ENCODE measurements at regions of chr1 and their contacts with region 1.

Region 1: GRCh38 chr1:173420330-173420806 is 56.8 kb upstream of the PRDX6 start:
- DNase-seq: no peak
- ATAC-seq: peak; percentile 26
- H3K4me3 ChIP-seq: no peak overlapping the region
- H3K27ac ChIP-seq: no peak overlapping the region
- H3K4me1 ChIP-seq: peaks cover 39% of the 10 kb centered on the region
- H3K27me3 ChIP-seq: no peaks in the 10 kb centered on the region
- CTCF ChIP-seq: peak; percentile 68 to 80 (median 73)
- EP300 ChIP-seq: no peak
- POLR2A ChIP-seq: no peak
- RAD21 ChIP-seq: peak; percentile 90

Region 2: DNA sequence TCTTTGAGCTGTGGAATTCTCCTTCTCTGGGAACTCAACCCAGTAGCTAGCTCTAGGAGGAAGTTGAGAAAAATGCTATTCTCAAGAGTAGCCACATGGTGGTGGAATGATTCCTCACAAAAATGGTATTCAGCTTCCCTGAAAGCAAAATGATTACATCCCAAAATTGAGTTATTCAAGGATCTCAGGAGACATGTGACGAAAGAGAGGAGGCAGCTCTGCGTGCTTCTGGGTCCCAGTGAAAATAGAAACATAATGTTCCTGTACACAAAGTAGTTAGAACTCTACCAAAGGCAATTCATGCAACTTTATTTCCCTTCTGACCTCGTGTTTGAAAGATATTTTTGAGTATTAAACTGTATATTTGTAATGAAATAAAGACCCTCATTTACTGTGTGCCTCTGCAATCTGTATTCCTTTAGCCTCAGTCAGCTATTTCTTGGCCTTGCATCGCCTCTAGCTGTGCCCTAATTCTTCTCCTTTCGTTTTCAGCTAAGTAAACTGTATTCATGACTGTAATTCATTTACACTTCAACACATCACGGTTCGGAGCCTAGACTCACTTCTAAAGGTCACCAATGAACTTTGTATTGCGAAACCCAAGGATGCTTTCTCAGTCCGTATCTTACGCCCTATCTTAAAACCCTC is 594.1 kb before region 1 on chr1:
- CTCF ChIA-PET with region 1: interaction called, 14 read pairs
- POLR2A ChIA-PET with region 1: no interaction called
- RAD21 ChIA-PET with region 1: interaction called, 15 read pairs
- SMC1A ChIA-PET with region 1: interaction called, 10 read pairs
- in situ Hi-C with region 1: loop called (anchors 5 kb)
- intact Hi-C with region 1: no loop called
- DNase-seq: no peak
- ATAC-seq: peak; percentile 65
- H3K4me3 ChIP-seq: no peak overlapping the region
- H3K27ac ChIP-seq: no peak overlapping the region
- H3K4me1 ChIP-seq: peaks cover 4% of the 10 kb centered on the region; the same call in 1 of the 2 replicates
- H3K27me3 ChIP-seq: no peaks in the 10 kb centered on the region
- CTCF ChIP-seq: peak; percentile 47 to 61 (median 51); a peak in 5 of 6 replicates
- EP300 ChIP-seq: no peak
- POLR2A ChIP-seq: no peak
- RAD21 ChIP-seq: peak; percentile 81

Region 3: DNA sequence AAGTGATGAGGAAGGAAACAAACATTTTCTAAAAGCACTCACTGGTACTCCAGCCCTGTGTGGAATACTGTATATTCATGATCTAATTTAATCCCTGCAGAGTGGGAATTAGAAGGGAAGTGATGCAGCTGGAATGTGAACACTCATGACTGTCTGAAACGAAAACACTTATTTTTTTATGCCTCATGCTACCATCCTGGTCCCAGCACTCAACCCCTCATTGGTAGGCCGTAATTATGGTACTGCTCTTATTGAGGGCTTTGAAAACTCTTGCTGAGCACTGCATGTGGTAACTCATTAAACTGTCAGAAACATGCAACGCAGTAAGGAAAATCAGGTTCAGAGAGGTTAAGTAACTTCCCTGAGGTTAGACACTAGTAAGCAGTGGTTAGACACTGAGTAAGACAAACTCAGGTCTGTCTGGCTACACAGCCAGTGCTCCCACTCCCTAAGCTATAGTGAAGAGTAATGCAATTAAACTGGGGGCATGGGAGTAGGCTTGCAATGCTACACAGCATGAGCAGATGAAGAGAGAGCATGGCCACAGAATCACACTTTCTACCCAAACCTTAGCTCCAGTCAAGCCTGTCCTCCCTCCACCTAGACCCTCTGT is 196.0 kb before region 1 on chr1:
- CTCF ChIA-PET with region 1: interaction called, 7 read pairs
- POLR2A ChIA-PET with region 1: interaction called, 3 read pairs
- RAD21 ChIA-PET with region 1: interaction called, 4 read pairs
- SMC1A ChIA-PET with region 1: interaction called, 14 read pairs
- in situ Hi-C with region 1: no loop called
- intact Hi-C with region 1: no loop called
- DNase-seq: no peak
- ATAC-seq: peak; percentile 13
- H3K4me3 ChIP-seq: no peak overlapping the region
- H3K27ac ChIP-seq: no peak overlapping the region
- H3K4me1 ChIP-seq: peaks cover 38% of the 10 kb centered on the region
- H3K27me3 ChIP-seq: no peaks in the 10 kb centered on the region
- CTCF ChIP-seq: no peak
- EP300 ChIP-seq: no peak
- POLR2A ChIP-seq: no peak
- RAD21 ChIP-seq: no peak

Region 4: DNA sequence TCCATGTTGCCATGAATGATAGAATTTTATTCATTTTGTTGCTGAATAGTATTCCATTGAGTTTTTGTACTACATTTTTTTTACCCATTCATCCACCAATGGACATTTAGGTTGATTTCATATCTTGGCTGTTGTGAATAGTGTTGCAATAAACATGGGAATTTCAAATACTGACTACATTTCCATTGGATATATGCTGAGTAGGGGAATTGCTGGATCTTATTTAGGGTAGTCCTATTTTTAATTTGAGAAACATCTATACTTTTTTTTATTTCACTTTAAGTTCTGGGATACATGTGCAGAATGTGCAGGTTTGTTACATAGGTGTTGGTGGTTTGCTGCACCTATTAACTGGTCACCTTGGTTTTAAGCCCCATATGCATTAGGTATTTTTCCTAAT is 174.5 kb before region 1 on chr1:
- CTCF ChIA-PET with region 1: no interaction called
- POLR2A ChIA-PET with region 1: no interaction called
- RAD21 ChIA-PET with region 1: no interaction called
- SMC1A ChIA-PET with region 1: no interaction called
- in situ Hi-C with region 1: no loop called
- intact Hi-C with region 1: no loop called
- DNase-seq: no peak
- ATAC-seq: no peak
- H3K4me3 ChIP-seq: no peak overlapping the region
- H3K27ac ChIP-seq: no peak overlapping the region
- H3K4me1 ChIP-seq: no peaks in the 10 kb centered on the region; the same call in 1 of the 2 replicates
- H3K27me3 ChIP-seq: no peaks in the 10 kb centered on the region
- CTCF ChIP-seq: no peak
- EP300 ChIP-seq: no peak
- POLR2A ChIP-seq: no peak
- RAD21 ChIP-seq: no peak

Region 5: GRCh38 chr1:173297798-173298391 is 122.5 kb before region 1 on chr1:
- CTCF ChIA-PET with region 1: no interaction called
- POLR2A ChIA-PET with region 1: interaction called, 5 read pairs
- RAD21 ChIA-PET with region 1: interaction called, 5 read pairs
- SMC1A ChIA-PET with region 1: interaction called, 16 read pairs
- in situ Hi-C with region 1: no loop called
- intact Hi-C with region 1: no loop called
- DNase-seq: peak; percentile 92
- ATAC-seq: peak; percentile 95
- H3K4me3 ChIP-seq: peak overlapping the region; percentile 1; the same call in 1 of the 2 replicates
- H3K27ac ChIP-seq: peak overlapping the region; percentile 46; the same call in 1 of the 2 replicates
- H3K4me1 ChIP-seq: peaks cover 29% of the 10 kb centered on the region
- H3K27me3 ChIP-seq: no peaks in the 10 kb centered on the region
- CTCF ChIP-seq: no peak
- EP300 ChIP-seq: peak; percentile 85 to 91
- POLR2A ChIP-seq: no peak
- RAD21 ChIP-seq: peak; percentile 25; the same call in 1 of the 2 replicates

Region 6: GRCh38 chr1:173444757-173445156 is 24.4 kb after region 1 on chr1:
- CTCF ChIA-PET with region 1: no interaction called
- POLR2A ChIA-PET with region 1: no interaction called
- RAD21 ChIA-PET with region 1: no interaction called
- SMC1A ChIA-PET with region 1: no interaction called
- in situ Hi-C with region 1: no loop called
- intact Hi-C with region 1: no loop called
- DNase-seq: no peak
- ATAC-seq: peak; percentile 52
- H3K4me3 ChIP-seq: no peak overlapping the region
- H3K27ac ChIP-seq: peak overlapping the region; percentile 48
- H3K4me1 ChIP-seq: peaks cover 18% of the 10 kb centered on the region
- H3K27me3 ChIP-seq: no peaks in the 10 kb centered on the region
- CTCF ChIP-seq: no peak
- EP300 ChIP-seq: no peak
- POLR2A ChIP-seq: no peak
- RAD21 ChIP-seq: no peak

Region 7: DNA sequence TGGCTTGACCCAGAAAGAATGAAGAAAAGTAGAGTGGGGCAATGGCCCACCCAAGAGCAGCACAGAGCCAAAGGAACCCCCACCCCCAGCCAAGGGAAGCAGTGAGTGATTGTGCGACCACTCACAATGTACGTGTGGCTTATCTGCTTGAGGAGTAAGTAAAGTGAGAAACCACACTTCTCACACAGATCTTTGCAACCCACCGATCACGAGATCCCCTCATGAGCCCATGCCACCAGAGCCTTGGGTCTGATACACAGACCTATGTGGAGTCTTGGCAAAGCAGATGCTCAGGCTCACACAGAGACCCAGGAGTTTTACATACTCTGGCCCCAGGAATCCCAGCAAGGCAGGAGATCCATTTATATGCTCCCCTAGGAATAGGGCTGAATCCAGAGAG is 196.5 kb after region 1 on chr1:
- CTCF ChIA-PET with region 1: no interaction called
- POLR2A ChIA-PET with region 1: no interaction called
- RAD21 ChIA-PET with region 1: no interaction called
- SMC1A ChIA-PET with region 1: no interaction called
- in situ Hi-C with region 1: no loop called
- intact Hi-C with region 1: no loop called
- DNase-seq: no peak
- ATAC-seq: no peak
- H3K4me3 ChIP-seq: no peak overlapping the region
- H3K27ac ChIP-seq: no peak overlapping the region
- H3K4me1 ChIP-seq: no peaks in the 10 kb centered on the region
- H3K27me3 ChIP-seq: no peaks in the 10 kb centered on the region; a peak in 1 of 4 replicates
- CTCF ChIP-seq: no peak
- EP300 ChIP-seq: no peak
- POLR2A ChIP-seq: no peak
- RAD21 ChIP-seq: no peak

Region 8: GRCh38 chr1:173824331-173825081 is 404.1 kb after region 1 on chr1 and contains the starts of genes CENPL and DARS2:
- CTCF ChIA-PET with region 1: interaction called, 6 read pairs
- POLR2A ChIA-PET with region 1: no interaction called
- RAD21 ChIA-PET with region 1: interaction called, 3 read pairs
- SMC1A ChIA-PET with region 1: interaction called, 5 read pairs
- in situ Hi-C with region 1: no loop called
- intact Hi-C with region 1: loop called (anchors 2 kb)
- DNase-seq: peak; percentile 94
- ATAC-seq: peak; percentile 87
- H3K4me3 ChIP-seq: peak within 1 kb of the TSS; percentile 92
- H3K27ac ChIP-seq: peak within 1 kb of the TSS; percentile 91
- H3K4me1 ChIP-seq: no peaks in the 10 kb centered on the region; the same call in 1 of the 2 replicates
- H3K27me3 ChIP-seq: no peaks in the 10 kb centered on the region
- CTCF ChIP-seq: no peak
- EP300 ChIP-seq: no peak; a peak in 1 of 4 replicates
- POLR2A ChIP-seq: peak; percentile 83
- RAD21 ChIP-seq: no peak
- polyA plus RNA-seq, gene CENPL: 14.9 to 26.7 TPM
- polyA plus RNA-seq, gene DARS2: 23.9 to 25.2 TPM